Mucosa of descending colon (tissue), 3 donors: ENCODE measurements at regions of chr13 and their contacts with region 1.

Region 1: DNA sequence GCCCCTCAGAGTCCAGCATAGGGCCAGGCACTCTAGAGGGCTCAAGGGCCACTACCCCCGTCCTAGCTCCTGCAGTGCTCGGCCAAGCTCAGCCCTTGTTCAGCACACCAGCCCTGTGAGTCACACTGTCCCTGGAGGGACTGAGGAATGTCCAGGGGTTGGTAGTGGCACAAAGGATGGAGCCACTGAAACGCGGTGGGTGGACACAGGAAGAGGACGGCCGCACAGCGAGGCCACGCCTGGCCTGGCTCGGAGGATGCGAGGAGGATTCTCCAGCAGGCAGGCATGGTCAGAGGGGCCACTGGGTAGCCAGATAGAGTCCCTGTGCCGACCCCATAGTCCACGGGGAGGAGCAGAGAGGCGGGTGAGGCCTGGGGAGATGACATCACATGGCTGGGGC is 45.7 kb downstream of the C1QTNF9 start:
- DNase-seq: no peak
- ATAC-seq: no peak
- H3K4me3 ChIP-seq: no peak overlapping the region
- H3K4me1 ChIP-seq: peaks cover 9% of the 10 kb centered on the region
- CTCF ChIP-seq: no peak

Region 2: DNA sequence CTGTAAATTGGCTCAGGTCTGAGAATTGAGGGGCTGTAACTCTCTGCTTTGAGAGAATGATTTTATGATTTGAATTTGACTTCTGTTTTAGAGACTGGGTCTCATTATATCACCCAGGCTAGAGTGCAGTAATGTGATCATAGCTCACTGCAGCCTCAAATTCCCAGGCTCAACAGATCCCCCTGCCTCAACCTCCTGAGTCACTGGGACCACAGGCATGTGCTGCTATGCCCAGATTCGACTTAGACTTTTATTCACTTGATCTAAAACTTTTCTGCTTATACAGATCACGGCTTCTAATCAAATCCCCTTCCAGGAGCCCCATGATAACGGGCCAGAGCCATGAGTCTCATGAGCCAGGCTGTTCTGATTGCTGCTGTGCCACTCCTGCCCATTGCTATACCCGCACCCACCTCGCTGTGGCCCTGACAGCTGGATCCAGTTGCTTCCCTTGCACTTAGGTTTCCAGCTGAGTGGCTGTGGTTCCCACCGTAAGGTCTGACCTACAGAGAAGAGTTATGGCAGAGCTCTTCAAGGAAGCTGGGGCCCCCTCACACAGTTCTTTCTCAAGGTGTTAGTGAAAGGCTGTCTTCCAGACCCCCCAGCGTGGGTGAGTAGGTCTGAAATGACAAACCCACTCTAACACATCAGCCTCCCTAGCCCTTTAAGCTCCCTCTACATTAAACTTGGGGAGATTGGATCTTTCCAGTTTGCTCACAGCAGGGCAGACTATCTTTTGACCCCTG is 1425.5 kb before region 1 on chr13:
- intact Hi-C with region 1: loop called in 1 of 2 experiments (anchors 10 kb)
- DNase-seq: no peak
- ATAC-seq: no peak
- H3K4me3 ChIP-seq: no peak overlapping the region
- H3K4me1 ChIP-seq: no peaks in the 10 kb centered on the region
- CTCF ChIP-seq: no peak